ENCODE measurements at regions of chr5 and their contacts with region 1.

Region 1: DNA sequence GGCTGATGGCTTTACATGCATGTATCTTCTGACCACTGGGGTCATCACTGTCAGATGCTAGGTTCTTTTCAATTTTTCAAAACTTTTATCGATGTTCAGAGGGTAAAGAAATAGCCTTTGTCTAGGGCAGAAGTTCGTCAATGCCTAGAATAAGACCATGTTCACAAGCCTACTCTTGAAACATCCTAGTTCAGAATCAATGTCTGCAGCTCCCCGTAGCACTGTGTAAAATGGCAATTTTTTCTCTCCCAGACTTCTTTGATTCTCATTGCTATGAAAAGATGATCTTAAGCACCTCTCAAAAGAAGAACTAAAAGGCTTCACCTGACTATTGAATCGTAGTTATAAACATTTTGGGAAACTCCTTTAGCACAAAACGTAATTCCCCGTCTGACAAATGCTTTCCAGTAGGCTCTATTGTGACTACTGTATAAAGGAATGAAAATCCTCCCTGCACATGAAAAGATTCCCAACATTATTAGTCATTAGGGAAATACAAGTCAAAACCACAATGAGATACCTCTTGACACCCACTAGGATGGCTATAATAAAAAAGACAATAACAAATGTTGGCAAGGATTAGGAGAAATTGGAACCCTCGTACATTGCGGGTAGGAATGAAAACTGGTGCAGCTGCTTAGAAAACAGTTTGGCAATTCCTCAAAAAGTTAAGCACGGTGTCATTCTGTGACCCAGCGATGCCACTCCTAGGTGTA is 263.5 kb downstream of the ARHGAP26 start:
- DNase-seq: no peak
- H3K4me3 Mint-ChIP-seq: no peak overlapping the region
- H3K27ac Mint-ChIP-seq: no peak overlapping the region
- H3K4me1 Mint-ChIP-seq: peaks cover 75% of the 10 kb centered on the region
- H3K27me3 Mint-ChIP-seq: no peaks in the 10 kb centered on the region

Region 2: DNA sequence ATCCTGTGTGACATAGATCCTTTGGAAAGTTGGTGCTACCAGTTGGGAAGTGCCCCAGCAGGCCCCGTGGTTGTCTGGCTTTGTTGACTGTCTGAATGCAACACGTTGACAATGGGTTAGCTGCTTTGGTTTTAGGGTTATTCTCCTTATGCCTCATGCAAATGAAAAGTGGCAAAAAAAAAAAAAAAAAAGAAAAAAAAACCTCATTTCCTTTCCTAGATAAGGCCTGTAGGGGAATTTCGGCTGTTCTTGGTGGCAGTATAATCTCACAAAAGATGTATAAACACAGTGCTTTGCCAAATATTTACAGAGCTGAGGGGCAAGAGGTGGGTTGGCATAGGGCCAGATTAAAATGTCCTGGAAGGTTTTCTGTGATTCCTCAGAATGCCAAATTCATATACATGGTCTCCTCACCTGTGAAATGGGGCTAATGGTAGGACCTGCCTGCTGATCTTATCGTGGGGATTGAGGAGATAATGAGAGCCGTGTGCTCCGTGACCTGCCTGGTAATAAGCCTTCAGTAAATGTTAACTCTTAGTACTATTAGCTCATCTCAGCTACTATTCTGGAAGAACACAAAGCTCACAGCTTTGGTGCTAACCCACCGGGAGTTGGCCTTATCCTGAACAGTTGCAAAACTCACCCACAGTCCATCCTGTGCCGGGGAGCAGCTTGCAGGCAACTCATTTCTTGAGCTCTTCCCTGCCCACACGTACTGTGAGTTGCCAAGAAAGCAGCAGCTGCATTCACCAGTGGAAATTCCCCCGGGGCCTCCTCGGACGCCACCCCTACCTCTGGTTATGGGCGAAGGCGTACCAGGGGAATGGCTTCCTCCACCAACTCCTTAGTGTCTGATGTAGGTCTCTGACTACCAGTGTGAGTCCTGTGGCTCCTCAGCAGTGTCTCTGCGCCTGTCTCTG is 149.5 kb after region 1 on chr5:
- CTCF ChIA-PET with region 1: no interaction called
- intact Hi-C with region 1: loop called (anchors 5 kb)
- DNase-seq: peak; percentile 73
- H3K4me3 Mint-ChIP-seq: no peak overlapping the region
- H3K27ac Mint-ChIP-seq: peak overlapping the region; percentile 68
- H3K4me1 Mint-ChIP-seq: peaks cover 29% of the 10 kb centered on the region
- H3K27me3 Mint-ChIP-seq: no peaks in the 10 kb centered on the region

Region 3: GRCh38 chr5:144844086-144844485 is 1810.4 kb after region 1 on chr5:
- CTCF ChIA-PET with region 1: no interaction called
- intact Hi-C with region 1: no loop called
- DNase-seq: no peak
- H3K4me3 Mint-ChIP-seq: no peak overlapping the region
- H3K27ac Mint-ChIP-seq: no peak overlapping the region
- H3K4me1 Mint-ChIP-seq: no peaks in the 10 kb centered on the region
- H3K27me3 Mint-ChIP-seq: no peaks in the 10 kb centered on the region

Measured in activated naive CD4-positive, alpha-beta T cell treated with anti-CD3 and anti-CD28 coated beads for 36 hours (primary cell).